ENCODE measurements at regions of chr11 and their contacts with region 1.

Region 1: GRCh38 chr11:33065445-33066178 is 26.2 kb downstream of the TCP11L1 start:
- DNase-seq: peak; percentile 76
- H3K4me3 Mint-ChIP-seq: no peak overlapping the region
- H3K27ac Mint-ChIP-seq: no peak overlapping the region
- H3K4me1 Mint-ChIP-seq: peaks cover 12% of the 10 kb centered on the region
- H3K27me3 Mint-ChIP-seq: no peaks in the 10 kb centered on the region
- CTCF ChIP-seq: peak; percentile 93

Region 2: DNA sequence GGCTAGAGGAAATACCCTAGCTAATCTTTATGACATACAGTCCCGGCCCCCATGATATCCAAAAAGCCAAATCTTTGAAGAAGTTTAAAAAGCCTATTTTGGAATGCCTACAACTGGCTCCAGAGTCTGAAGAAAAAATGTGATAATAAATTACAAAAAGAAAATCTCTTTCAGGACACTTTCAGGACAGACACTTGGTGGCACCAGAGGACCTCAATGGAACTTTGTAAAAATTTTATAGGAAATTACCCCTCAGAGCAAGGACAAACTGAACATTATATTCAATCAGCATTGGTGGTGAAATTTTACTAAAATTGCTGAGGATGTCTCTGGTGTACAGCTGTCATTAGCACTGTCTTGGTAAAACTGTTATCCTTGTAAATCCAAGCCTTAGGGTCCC is 352.1 kb before region 1 on chr11:
- CTCF ChIA-PET with region 1: interaction called, 4 read pairs
- intact Hi-C with region 1: loop called (anchors 10 kb)
- DNase-seq: peak; percentile 28
- H3K4me3 Mint-ChIP-seq: no peak overlapping the region
- H3K27ac Mint-ChIP-seq: no peak overlapping the region
- H3K4me1 Mint-ChIP-seq: peaks cover 13% of the 10 kb centered on the region
- H3K27me3 Mint-ChIP-seq: no peaks in the 10 kb centered on the region
- CTCF ChIP-seq: peak; percentile 54

Region 3: DNA sequence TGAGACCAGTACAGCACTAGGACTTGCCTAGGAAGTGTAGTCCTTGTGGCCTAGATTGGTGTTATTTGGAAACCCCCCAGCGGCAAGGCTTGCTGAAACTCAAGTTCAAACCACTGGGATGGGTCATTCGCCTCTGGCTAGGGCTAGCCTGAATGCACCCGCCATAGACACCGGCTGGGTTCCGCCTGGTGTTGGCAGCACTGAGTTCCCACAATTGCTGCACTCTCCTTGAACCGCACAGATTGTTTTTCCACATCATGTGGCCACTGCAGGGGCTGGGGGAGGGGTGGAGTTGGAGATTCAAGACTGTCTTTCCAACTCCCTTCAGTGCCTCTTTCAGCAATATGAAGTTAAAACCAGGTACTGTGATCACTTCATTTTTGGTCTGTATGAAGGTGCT is 314.2 kb before region 1 on chr11:
- CTCF ChIA-PET with region 1: no interaction called
- intact Hi-C with region 1: loop called (anchors 5 kb)
- DNase-seq: no peak
- H3K4me3 Mint-ChIP-seq: no peak overlapping the region
- H3K27ac Mint-ChIP-seq: no peak overlapping the region
- H3K4me1 Mint-ChIP-seq: no peaks in the 10 kb centered on the region
- H3K27me3 Mint-ChIP-seq: peaks cover 37% of the 10 kb centered on the region
- CTCF ChIP-seq: no peak

Region 4: DNA sequence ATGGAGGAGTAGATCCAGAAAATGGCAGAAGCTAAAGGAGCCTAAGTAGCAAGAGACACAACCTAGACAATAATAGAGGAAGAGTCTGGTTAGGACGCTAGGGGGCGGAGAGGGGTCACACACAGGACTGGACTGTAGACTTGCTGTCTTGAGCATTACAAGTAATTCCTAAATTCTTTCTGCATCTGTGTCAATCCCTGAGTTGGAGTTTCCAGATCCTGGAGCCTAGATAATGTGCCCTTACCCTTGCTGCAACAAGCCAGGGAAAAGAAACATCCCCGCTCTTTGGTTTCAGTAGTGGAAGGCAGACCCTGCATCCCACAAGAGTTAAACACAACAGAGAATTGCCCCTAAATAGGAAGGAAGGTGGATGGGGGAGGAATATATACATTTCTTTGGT is 256.3 kb before region 1 on chr11:
- CTCF ChIA-PET with region 1: interaction called, 3 read pairs
- intact Hi-C with region 1: loop called (anchors 1 kb)
- DNase-seq: peak; percentile 84
- H3K4me3 Mint-ChIP-seq: no peak overlapping the region
- H3K27ac Mint-ChIP-seq: no peak overlapping the region
- H3K4me1 Mint-ChIP-seq: peaks cover 8% of the 10 kb centered on the region
- H3K27me3 Mint-ChIP-seq: no peaks in the 10 kb centered on the region
- CTCF ChIP-seq: peak; percentile 76

Region 5: DNA sequence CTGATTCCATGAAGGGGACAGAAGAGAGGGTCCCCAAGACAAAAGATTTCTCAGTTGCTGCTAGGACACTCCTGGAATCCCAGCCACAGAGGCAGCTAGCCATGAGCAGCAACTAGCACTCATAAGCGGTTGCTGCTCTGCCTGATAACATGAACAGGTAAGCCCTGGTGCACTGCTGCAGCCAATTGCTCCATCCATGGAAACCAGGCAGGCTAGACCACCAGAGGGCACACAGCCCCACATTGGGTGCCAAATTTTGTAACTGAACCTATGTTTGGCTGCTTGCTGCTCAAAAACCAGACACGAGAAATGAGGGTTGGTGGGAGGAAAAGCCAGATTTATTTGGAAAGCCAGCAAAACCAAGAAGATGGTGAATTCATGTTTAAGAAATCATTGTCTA is 194.9 kb before region 1 on chr11:
- CTCF ChIA-PET with region 1: no interaction called
- intact Hi-C with region 1: loop called (anchors 1 kb)
- DNase-seq: peak; percentile 38
- H3K4me3 Mint-ChIP-seq: no peak overlapping the region
- H3K27ac Mint-ChIP-seq: no peak overlapping the region
- H3K4me1 Mint-ChIP-seq: no peaks in the 10 kb centered on the region
- H3K27me3 Mint-ChIP-seq: no peaks in the 10 kb centered on the region
- CTCF ChIP-seq: peak; percentile 40

Region 6: DNA sequence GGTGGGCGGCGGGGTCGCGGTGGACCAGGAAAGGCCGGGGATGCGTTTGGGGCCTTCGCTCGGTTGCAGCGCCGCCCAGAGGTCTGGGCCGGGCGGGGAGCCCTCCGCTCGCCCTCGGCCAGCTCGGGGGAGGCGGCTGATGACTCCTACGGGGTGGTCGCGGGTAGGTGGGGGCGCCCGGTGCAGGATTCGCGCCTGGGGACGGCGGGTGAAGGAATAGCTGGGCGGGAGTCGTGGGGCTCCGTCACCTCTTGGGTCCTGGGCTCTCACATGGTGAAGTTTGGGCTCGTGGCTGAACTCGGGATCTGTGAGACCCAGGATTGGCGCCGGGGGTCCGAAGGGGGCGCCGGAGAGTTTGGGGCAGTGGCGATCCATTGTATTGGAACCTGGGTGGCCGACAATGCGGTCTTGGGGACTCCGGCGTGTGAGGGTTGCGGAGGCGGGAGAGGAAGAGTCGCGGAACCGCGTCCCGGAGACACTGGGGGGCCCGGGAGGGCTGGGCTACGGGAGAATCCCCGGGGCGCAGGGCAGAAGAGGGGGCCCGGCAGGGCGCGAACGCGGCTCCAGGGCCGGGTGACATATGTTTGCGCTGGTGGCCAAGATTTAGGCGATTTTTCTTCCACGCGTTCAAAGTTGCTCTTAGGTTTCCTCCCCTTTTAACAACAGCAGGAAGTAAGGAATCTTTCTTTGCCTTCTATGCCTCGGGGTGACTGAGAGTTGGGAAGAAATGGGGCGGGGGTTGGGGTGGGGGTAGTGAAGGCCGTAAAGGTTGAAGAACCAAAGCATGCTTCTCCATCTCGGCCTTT is 172.1 kb before region 1 on chr11:
- CTCF ChIA-PET with region 1: no interaction called
- intact Hi-C with region 1: loop called (anchors 10 kb)
- DNase-seq: peak; percentile 70
- H3K4me3 Mint-ChIP-seq: peak overlapping the region; percentile 95
- H3K27ac Mint-ChIP-seq: peak overlapping the region; percentile 91
- H3K4me1 Mint-ChIP-seq: peaks cover 13% of the 10 kb centered on the region
- H3K27me3 Mint-ChIP-seq: no peaks in the 10 kb centered on the region
- CTCF ChIP-seq: peak; percentile 25

Region 7: GRCh38 chr11:32960553-32961164 is 105.0 kb before region 1 on chr11:
- CTCF ChIA-PET with region 1: interaction called, 4 read pairs
- intact Hi-C with region 1: loop called (anchors 1 kb)
- DNase-seq: no peak
- H3K4me3 Mint-ChIP-seq: no peak overlapping the region
- H3K27ac Mint-ChIP-seq: no peak overlapping the region
- H3K4me1 Mint-ChIP-seq: no peaks in the 10 kb centered on the region
- H3K27me3 Mint-ChIP-seq: no peaks in the 10 kb centered on the region
- CTCF ChIP-seq: no peak

Region 8: GRCh38 chr11:33736148-33736809 is 670.7 kb after region 1 on chr11 and contains the start of gene CD59:
- CTCF ChIA-PET with region 1: no interaction called
- intact Hi-C with region 1: no loop called
- DNase-seq: peak; percentile 98
- H3K4me3 Mint-ChIP-seq: peak within 1 kb of the TSS; percentile 77
- H3K27ac Mint-ChIP-seq: peak within 1 kb of the TSS; percentile 58
- H3K4me1 Mint-ChIP-seq: peaks cover 47% of the 10 kb centered on the region
- H3K27me3 Mint-ChIP-seq: no peaks in the 10 kb centered on the region
- CTCF ChIP-seq: no peak
- total RNA-seq, gene CD59: 1,185 and 1,281 TPM in 2 replicates

Measured in Calu3 (cell line).